CD4-positive, alpha-beta memory T cell (primary cell): ENCODE measurements at regions of chr12 and their contacts with region 1.

Region 1: DNA sequence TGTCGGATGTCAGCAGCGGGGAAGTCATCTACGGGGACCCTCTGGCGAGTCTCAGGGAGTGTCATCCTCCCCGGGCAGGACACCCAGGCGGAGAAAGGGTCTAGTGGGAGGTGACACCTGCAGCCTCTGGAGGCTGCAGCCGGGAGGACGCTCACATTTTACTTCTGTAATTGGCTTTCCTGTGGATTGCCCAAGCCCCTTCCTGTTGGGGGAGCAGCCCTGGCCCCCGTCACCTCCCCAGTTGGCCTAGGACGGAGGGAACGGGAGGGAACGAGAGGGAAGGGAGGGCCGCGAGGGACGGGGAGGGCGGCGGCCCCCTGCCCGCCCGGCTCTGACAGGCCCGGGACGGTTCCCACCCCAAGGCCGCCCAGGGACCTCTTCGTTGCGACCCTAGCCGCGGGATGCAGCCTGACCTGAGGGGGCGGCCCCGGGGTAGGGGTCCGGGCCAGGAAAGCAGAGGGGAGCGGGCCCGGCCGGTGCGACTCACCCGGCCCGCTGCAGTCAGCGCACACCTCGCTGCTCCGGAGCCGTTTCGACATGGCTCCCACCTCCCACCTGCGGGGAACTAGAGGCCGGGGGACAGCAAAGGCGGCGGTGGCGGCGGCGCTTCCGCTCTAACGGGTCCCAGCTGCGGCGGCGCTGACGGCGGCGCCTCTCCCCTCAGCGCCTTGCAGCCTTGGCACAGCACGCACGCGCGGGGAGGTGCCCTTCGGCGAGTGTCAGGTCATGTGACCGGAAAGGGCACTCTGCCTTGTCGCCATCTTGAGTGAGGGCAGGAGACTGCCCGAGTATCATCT is at the start of gene GIT2:
- DNase-seq: peak; percentile 93 to 95 (median 95)
- H3K4me3 ChIP-seq: peak within 1 kb of the TSS; percentile 62 to 87
- H3K4me3 Mint-ChIP-seq: peak within 1 kb of the TSS; percentile 87 to 98 (median 94)
- H3K27ac ChIP-seq: peak within 1 kb of the TSS; percentile 93
- H3K27ac Mint-ChIP-seq: peak within 1 kb of the TSS; percentile 92 to 98 (median 96)
- H3K4me1 ChIP-seq: peaks cover 57% of the 10 kb centered on the region
- H3K4me1 Mint-ChIP-seq: peaks cover 36 to 82% (median 57%) of the 10 kb centered on the region in 4 donors
- H3K27me3 ChIP-seq: no peaks in the 10 kb centered on the region
- H3K27me3 Mint-ChIP-seq: no peaks in the 10 kb centered on the region
- total RNA-seq, gene GIT2: 133 to 149 TPM

Region 2: DNA sequence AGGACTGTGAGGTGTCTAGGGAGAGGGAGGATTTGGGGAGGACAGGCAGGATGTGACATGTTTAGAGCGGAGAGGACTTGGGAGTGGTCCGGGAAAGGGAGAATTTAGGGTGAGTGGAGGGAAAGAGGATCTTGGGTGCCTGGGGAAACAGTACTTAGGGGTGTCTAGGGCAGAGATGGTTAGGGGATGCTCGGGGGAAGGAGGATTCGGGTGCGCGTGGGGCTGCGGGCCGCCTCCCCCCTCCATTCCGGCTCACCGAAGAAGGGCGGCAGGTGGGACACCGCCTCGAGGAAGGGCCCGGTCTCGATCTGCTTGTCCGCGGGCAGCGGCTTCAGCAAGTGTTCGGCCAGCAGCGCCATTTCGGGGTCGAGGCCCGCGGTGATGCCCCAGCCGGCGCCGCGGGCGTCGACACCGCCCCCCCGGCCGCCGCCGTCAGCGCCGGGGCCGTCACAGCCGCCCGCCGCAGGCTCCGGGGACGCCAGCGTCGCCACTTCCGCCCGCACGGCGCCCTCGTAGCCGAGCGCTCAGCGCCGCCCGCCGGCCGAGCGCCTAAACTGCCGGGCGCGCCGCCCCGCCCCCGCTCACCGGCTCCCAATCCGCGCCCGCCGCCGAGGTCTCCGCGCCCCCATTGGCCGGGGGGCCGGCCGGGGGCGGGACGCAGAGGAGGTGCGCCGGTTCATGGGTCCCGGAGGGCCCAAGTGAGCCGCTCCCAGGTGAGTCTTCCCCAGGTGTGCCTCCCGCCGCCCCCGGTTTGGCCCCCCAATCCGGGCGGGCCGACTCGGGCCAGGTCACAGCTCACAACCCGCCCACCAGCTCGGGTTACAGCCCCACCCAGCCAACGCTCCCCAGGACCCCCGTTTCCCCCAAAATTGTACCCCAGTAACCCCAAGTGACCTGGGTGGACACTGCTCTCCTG is 115.6 kb before region 1 on chr12 and contains the start of gene GLTP:
- CTCF ChIA-PET with region 1: no interaction called
- POLR2A ChIA-PET with region 1: no interaction called
- intact Hi-C with region 1: loop called (anchors 5 kb)
- DNase-seq: peak; percentile 83 to 95 (median 93)
- H3K4me3 ChIP-seq: peak within 1 kb of the TSS; percentile 82 to 97
- H3K4me3 Mint-ChIP-seq: peak within 1 kb of the TSS; percentile 94 to 98 (median 96)
- H3K27ac ChIP-seq: peak within 1 kb of the TSS; percentile 96
- H3K27ac Mint-ChIP-seq: peak within 1 kb of the TSS; percentile 92 to 99 (median 98)
- H3K4me1 ChIP-seq: peaks cover 42% of the 10 kb centered on the region
- H3K4me1 Mint-ChIP-seq: peaks cover 30 to 56% (median 44%) of the 10 kb centered on the region in 4 donors
- H3K27me3 ChIP-seq: no peaks in the 10 kb centered on the region
- H3K27me3 Mint-ChIP-seq: peaks cover 0 to 2% of the 10 kb centered on the region in 2 donors
- total RNA-seq, gene GLTP: 24.0 TPM

Region 3: GRCh38 chr12:109944561-109945359 is 51.1 kb before region 1 on chr12:
- CTCF ChIA-PET with region 1: no interaction called
- POLR2A ChIA-PET with region 1: interaction called, 5 read pairs
- intact Hi-C with region 1: loop called (anchors 5 kb)
- DNase-seq: no peak
- H3K4me3 ChIP-seq: no peak overlapping the region
- H3K4me3 Mint-ChIP-seq: no peak overlapping the region
- H3K27ac ChIP-seq: no peak overlapping the region
- H3K27ac Mint-ChIP-seq: peak overlapping the region in 1 of 7 donors; percentile 25
- H3K4me1 ChIP-seq: peaks cover 26% of the 10 kb centered on the region
- H3K4me1 Mint-ChIP-seq: peaks cover 22 to 27% (median 24%) of the 10 kb centered on the region in 4 donors
- H3K27me3 ChIP-seq: no peaks in the 10 kb centered on the region
- H3K27me3 Mint-ChIP-seq: no peaks in the 10 kb centered on the region

Region 4: GRCh38 chr12:109982210-109982609 is 13.7 kb before region 1 on chr12:
- CTCF ChIA-PET with region 1: interaction called, 3 read pairs
- POLR2A ChIA-PET with region 1: interaction called, 23 read pairs
- intact Hi-C with region 1: loop called (anchors 1 kb)
- DNase-seq: no peak
- H3K4me3 ChIP-seq: no peak overlapping the region
- H3K4me3 Mint-ChIP-seq: peak overlapping the region in 4 of 8 donors; percentile 4 to 71 (median 43)
- H3K27ac ChIP-seq: peak overlapping the region; percentile 47
- H3K27ac Mint-ChIP-seq: peak overlapping the region in 6 of 7 donors; percentile 31 to 91 (median 76)
- H3K4me1 ChIP-seq: peaks cover 33% of the 10 kb centered on the region
- H3K4me1 Mint-ChIP-seq: peaks cover 26 to 51% (median 43%) of the 10 kb centered on the region in 4 donors
- H3K27me3 ChIP-seq: no peaks in the 10 kb centered on the region
- H3K27me3 Mint-ChIP-seq: no peaks in the 10 kb centered on the region

Region 5: GRCh38 chr12:110048242-110049027 is 52.6 kb after region 1 on chr12 and contains the start of gene C12orf76:
- CTCF ChIA-PET with region 1: no interaction called
- POLR2A ChIA-PET with region 1: interaction called, 7 read pairs
- intact Hi-C with region 1: loop called (anchors 1 kb)
- DNase-seq: peak; percentile 89 to 94 (median 91)
- H3K4me3 ChIP-seq: peak within 1 kb of the TSS; percentile 40 to 74
- H3K4me3 Mint-ChIP-seq: peak within 1 kb of the TSS; percentile 89 to 98 (median 94)
- H3K27ac ChIP-seq: peak within 1 kb of the TSS; percentile 61
- H3K27ac Mint-ChIP-seq: peak within 1 kb of the TSS; percentile 89 to 100 (median 98)
- H3K4me1 ChIP-seq: peaks cover 25% of the 10 kb centered on the region
- H3K4me1 Mint-ChIP-seq: peaks cover 20 to 49% (median 26%) of the 10 kb centered on the region in 4 donors
- H3K27me3 ChIP-seq: no peaks in the 10 kb centered on the region
- H3K27me3 Mint-ChIP-seq: no peaks in the 10 kb centered on the region
- total RNA-seq, gene C12orf76: 26.4 to 33.5 TPM

Region 6: GRCh38 chr12:110320550-110320949 is 324.7 kb after region 1 on chr12:
- CTCF ChIA-PET with region 1: no interaction called
- POLR2A ChIA-PET with region 1: no interaction called
- intact Hi-C with region 1: no loop called
- DNase-seq: no peak
- H3K4me3 ChIP-seq: no peak overlapping the region
- H3K4me3 Mint-ChIP-seq: no peak overlapping the region
- H3K27ac ChIP-seq: no peak overlapping the region
- H3K27ac Mint-ChIP-seq: peak overlapping the region in 1 of 7 donors; percentile 6
- H3K4me1 ChIP-seq: peaks cover 8% of the 10 kb centered on the region
- H3K4me1 Mint-ChIP-seq: peaks cover 20 to 38% (median 27%) of the 10 kb centered on the region in 4 donors
- H3K27me3 ChIP-seq: no peaks in the 10 kb centered on the region
- H3K27me3 Mint-ChIP-seq: no peaks in the 10 kb centered on the region

Region 7: GRCh38 chr12:110829288-110829687 is 833.4 kb after region 1 on chr12:
- CTCF ChIA-PET with region 1: no interaction called
- POLR2A ChIA-PET with region 1: no interaction called
- intact Hi-C with region 1: no loop called
- DNase-seq: no peak
- H3K4me3 ChIP-seq: no peak overlapping the region
- H3K4me3 Mint-ChIP-seq: no peak overlapping the region
- H3K27ac ChIP-seq: no peak overlapping the region
- H3K27ac Mint-ChIP-seq: no peak overlapping the region
- H3K4me1 ChIP-seq: peaks cover 6% of the 10 kb centered on the region
- H3K4me1 Mint-ChIP-seq: peaks cover 3 to 7% (median 7%) of the 10 kb centered on the region in 4 donors
- H3K27me3 ChIP-seq: no peaks in the 10 kb centered on the region
- H3K27me3 Mint-ChIP-seq: peaks cover 3 to 5% of the 10 kb centered on the region in 2 donors